ENCODE measurements at regions of chr18 and their contacts with region 1.

Region 1: GRCh38 chr18:11883153-11883552 is 25.0 kb downstream of the MPPE1 start:
- DNase-seq: no peak
- H3K4me3 ChIP-seq: no peak overlapping the region
- H3K27ac ChIP-seq: no peak overlapping the region
- H3K4me1 ChIP-seq: no peaks in the 10 kb centered on the region
- H3K27me3 ChIP-seq: no peaks in the 10 kb centered on the region
- CTCF ChIP-seq: no peak

Region 2: GRCh38 chr18:10663750-10664149 is 1219.4 kb before region 1 on chr18:
- CTCF ChIA-PET with region 1: no interaction called
- POLR2A ChIA-PET with region 1: interaction called, 16 read pairs
- intact Hi-C with region 1: no loop called
- DNase-seq: no peak
- H3K4me3 ChIP-seq: no peak overlapping the region
- H3K27ac ChIP-seq: no peak overlapping the region
- H3K4me1 ChIP-seq: no peaks in the 10 kb centered on the region
- H3K27me3 ChIP-seq: no peaks in the 10 kb centered on the region
- CTCF ChIP-seq: no peak

Region 3: DNA sequence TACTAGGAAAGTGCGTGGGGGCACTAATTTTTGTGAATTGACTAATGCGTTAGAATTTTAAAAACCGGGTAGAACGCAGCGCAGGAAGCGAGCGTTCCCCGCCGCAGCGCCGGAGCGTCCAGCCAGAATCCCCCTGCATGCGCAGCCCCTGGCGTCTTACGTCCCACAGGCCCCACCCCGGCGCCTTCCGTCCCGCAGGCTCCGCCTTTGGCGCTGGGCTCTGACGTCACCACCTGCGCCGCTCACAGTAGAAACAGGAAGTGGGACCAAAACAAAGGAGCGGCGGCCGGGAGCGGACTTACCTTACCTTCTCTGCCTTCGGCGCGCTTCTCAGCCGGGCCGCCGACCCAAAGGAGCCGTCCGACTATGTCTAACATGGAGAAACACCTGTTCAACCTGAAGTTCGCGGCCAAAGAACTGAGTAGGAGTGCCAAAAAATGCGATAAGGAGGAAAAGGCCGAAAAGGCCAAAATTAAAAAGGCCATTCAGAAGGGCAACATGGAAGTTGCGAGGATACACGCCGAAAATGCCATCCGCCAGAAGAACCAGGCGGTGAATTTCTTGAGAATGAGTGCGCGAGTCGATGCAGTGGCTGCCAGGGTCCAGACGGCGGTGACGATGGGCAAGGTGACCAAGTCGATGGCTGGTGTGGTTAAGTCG is 31.9 kb before region 1 on chr18 and contains the start of gene CHMP1B:
- CTCF ChIA-PET with region 1: no interaction called
- POLR2A ChIA-PET with region 1: no interaction called
- intact Hi-C with region 1: no loop called
- DNase-seq: peak; percentile 98
- H3K4me3 ChIP-seq: peak within 1 kb of the TSS; percentile 82
- H3K27ac ChIP-seq: peak within 1 kb of the TSS; percentile 80
- H3K4me1 ChIP-seq: peaks cover 3% of the 10 kb centered on the region
- H3K27me3 ChIP-seq: peaks cover 4% of the 10 kb centered on the region
- CTCF ChIP-seq: no peak
- total RNA-seq, gene CHMP1B: 17.1 and 19.1 TPM in 2 replicates